Aorta (tissue), 5 donors: ENCODE measurements at regions of chr12 and their contacts with region 1.

Region 1: GRCh38 chr12:94262228-94263010 is 114.0 kb downstream of the PLXNC1 start:
- DNase-seq: peak; percentile 92 to 95
- ATAC-seq: peak; percentile 89
- H3K4me3 ChIP-seq: peak overlapping the region; percentile 69 to 70
- H3K27ac ChIP-seq: peak overlapping the region; percentile 19 to 74
- H3K4me1 ChIP-seq: no peaks in the 10 kb centered on the region
- H3K27me3 ChIP-seq: no peaks in the 10 kb centered on the region

Region 2: DNA sequence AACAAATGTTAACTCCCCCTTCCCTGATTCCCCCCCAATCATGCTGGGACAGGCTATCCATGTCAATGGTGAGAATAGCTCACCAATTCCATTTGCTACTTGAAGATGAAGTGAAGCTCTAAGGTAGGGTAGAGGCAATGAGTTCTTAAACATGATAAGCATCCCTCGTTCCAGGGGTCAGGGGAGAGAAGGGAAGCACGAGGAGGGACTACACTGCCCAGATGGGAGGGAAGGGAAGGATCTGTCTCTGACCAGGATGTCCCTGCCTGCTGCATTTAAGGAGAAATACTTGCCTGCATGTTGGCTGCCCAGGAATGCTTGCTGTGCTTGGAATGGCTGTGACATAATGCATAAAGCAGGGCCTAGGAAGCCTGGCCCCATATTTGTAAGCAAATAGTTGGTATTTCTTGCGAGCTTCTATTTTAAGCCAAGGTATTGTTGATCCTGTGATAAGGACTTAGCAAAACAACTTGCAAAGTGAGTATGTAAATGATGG is 42.2 kb after region 1 on chr12:
- intact Hi-C with region 1: loop called in 1 of 2 experiments (anchors 5 kb)
- DNase-seq: no peak
- ATAC-seq: no peak
- H3K4me3 ChIP-seq: no peak overlapping the region
- H3K27ac ChIP-seq: peak overlapping the region; percentile 95
- H3K4me1 ChIP-seq: peaks cover 0 to 3% of the 10 kb centered on the region in 2 donors
- H3K27me3 ChIP-seq: no peaks in the 10 kb centered on the region

Region 3: DNA sequence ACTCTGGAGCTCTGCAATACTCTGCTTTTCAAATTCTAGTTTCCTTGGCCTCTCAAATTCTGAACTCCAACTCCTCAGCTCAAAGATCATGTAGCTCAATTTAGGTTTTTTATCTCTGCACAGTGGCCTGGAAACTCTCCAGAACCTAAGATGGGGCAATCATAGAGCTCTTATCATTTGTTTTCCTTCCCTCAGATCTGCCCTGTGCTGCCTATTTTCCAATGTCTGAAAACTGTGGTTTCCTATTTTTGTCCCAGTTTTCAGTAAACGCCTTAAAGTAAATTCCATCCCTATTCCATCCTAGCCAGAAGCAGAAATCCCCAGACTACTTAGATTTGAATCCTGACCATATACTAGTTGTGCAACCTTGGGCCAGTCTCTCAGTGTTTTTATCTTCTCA is 124.0 kb after region 1 on chr12:
- intact Hi-C with region 1: no loop called
- DNase-seq: no peak
- ATAC-seq: peak; percentile 76
- H3K4me3 ChIP-seq: no peak overlapping the region
- H3K27ac ChIP-seq: no peak overlapping the region
- H3K4me1 ChIP-seq: no peaks in the 10 kb centered on the region
- H3K27me3 ChIP-seq: no peaks in the 10 kb centered on the region

Region 4: GRCh38 chr12:94459728-94460615 is 197.6 kb after region 1 on chr12 and contains the start of gene CEP83:
- intact Hi-C with region 1: loop called in 1 of 2 experiments (anchors 10 kb)
- DNase-seq: peak; percentile 99 to 100
- ATAC-seq: peak; percentile 99
- H3K4me3 ChIP-seq: peak within 1 kb of the TSS; percentile 72 to 95
- H3K27ac ChIP-seq: peak within 1 kb of the TSS in 1 of 2 donors; percentile 71
- H3K4me1 ChIP-seq: no peaks in the 10 kb centered on the region
- H3K27me3 ChIP-seq: no peaks in the 10 kb centered on the region
- total RNA-seq, gene CEP83: 16.5 to 17.1 TPM